Esophagus squamous epithelium (tissue), 5 donors: ENCODE measurements at regions of chr20 and their contacts with region 1.

Region 1: DNA sequence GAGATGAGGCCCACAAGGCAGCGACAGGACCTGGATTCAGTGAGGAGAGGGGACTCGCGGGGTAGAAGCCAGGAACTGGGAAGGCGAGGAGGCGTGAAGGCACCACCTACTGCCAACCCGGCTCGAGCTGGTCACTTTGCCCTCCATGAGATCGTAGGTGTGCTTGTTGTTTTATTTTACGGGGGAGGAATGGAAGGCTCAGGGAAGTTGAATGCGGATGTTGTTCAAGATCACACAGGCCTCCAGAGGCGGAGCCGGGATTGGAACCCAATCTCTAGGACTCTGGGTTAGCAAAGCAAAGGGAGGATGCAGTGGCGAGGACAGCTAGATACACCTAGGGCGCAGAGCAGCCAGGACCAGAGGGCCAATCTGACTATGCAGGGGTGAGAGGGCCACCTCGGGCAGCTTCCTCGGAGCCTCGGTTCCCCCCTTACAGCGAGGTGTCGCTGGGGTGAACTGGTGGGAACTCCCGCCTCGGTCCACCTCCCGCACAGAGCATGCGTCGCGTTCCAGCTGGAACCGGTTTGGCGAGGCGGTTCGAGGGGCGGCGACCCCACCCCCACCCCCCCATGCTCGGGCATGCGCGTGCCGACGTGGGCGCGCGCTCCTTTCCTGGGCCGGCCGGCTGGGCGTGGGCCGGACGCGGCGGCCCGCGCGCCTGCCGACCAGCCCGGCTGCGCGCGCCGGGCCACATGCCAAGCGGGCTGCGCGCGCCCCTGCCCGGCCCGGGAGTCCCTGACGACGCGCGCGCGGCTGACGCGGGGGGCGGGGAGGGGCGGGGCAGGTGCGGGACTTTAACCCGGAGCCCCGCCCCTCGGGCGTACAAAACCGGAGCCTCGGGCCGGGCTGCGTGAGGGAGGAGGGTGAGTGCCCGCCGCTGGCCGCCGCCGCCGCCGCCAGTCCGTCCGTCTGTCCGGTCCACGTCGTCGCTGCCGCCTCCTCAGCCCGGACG is 80.4 kb upstream of the MYL9 start:
- DNase-seq: peak; percentile 82
- H3K4me3 ChIP-seq: peak overlapping the region; percentile 58 to 87 (median 74)
- H3K27ac ChIP-seq: peak overlapping the region; percentile 94 to 99 (median 95)
- H3K4me1 ChIP-seq: peaks cover 38 to 51% (median 43%) of the 10 kb centered on the region in 3 donors
- H3K27me3 ChIP-seq: no peaks in the 10 kb centered on the region
- CTCF ChIP-seq: peak in 1 of 6 experiments; percentile 33
- POLR2A ChIP-seq: peak in 3 of 4 donors; percentile 84 to 95 (median 94)

Region 2: DNA sequence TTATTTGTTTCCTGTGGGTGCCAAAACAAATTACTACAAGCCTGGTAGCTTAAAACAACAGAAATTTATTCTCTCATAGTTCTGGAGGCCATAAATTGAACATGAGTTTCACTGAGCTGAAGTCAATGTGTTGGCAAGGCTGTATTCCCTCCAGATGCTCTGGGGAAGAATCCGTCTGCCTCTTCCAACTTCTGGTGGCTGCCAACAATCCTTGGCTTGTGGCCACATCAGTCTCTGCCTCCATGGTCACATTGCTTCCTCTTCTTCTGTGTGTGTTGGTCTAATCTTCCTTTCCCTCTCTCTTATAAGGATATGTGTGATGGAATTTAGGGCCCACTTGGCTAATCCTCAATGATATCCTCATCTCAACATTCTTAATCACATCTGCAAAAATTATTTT is 399.2 kb before region 1 on chr20:
- intact Hi-C with region 1: no loop called
- DNase-seq: no peak
- H3K4me3 ChIP-seq: no peak overlapping the region
- H3K27ac ChIP-seq: no peak overlapping the region
- H3K4me1 ChIP-seq: peaks cover 6 to 31% (median 14%) of the 10 kb centered on the region in 3 donors
- H3K27me3 ChIP-seq: no peaks in the 10 kb centered on the region
- CTCF ChIP-seq: no peak
- POLR2A ChIP-seq: no peak

Region 3: DNA sequence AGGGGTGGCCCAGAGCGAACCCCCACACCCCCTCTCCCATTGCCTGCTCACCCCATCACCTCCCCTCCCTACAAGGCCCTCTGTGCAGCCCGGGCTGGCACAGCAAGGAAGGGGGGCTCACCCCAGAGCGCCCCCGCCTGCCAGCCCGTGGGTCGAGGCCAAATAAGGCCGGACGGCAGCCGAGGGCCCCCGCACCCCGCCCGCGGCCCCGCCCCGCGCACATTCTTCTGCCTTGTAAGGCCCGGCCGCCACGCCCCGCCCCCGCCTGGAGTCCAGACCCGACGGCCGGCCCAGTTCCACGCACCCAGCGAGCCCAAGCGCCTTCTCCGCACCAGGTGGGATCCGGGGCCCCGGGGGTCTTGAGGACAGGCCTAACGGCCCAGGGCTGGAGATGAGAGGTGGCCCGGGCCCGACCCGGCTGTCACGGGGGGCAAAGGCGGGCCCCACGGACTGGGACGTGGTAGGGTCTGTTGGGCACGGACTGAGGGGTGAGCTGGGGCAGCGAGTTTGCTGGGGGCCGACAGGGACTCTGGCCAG is 80.4 kb after region 1 on chr20 and contains the start of gene MYL9:
- intact Hi-C with region 1: loop called (anchors 10 kb)
- DNase-seq: no peak
- H3K4me3 ChIP-seq: peak within 1 kb of the TSS; percentile 56 to 72 (median 68)
- H3K27ac ChIP-seq: peak within 1 kb of the TSS; percentile 77 to 94 (median 91)
- H3K4me1 ChIP-seq: peaks cover 11 to 63% (median 25%) of the 10 kb centered on the region in 3 donors
- H3K27me3 ChIP-seq: peaks cover 0 to 18% (median 0%) of the 10 kb centered on the region in 4 donors
- CTCF ChIP-seq: no peak
- POLR2A ChIP-seq: peak in 2 of 4 donors; percentile 29 to 65
- total RNA-seq, gene MYL9: 10.7 to 313 (median 60.7) TPM

Region 4: GRCh38 chr20:36591854-36592641 is 131.1 kb after region 1 on chr20:
- intact Hi-C with region 1: no loop called
- DNase-seq: no peak
- H3K4me3 ChIP-seq: no peak overlapping the region
- H3K27ac ChIP-seq: no peak overlapping the region
- H3K4me1 ChIP-seq: peaks cover 0 to 15% (median 0%) of the 10 kb centered on the region in 3 donors
- H3K27me3 ChIP-seq: peaks cover 0 to 26% (median 0%) of the 10 kb centered on the region in 4 donors
- CTCF ChIP-seq: peak in 4 of 6 experiments; percentile 20 to 42 (median 33)
- POLR2A ChIP-seq: no peak